ENCODE measurements at regions of chr22 and their contacts with region 1.

Region 1: GRCh38 chr22:38051900-38052862 is 5.0 kb upstream of the PICK1 start:
- DNase-seq: peak; percentile 83
- H3K4me3 ChIP-seq: no peak overlapping the region
- H3K27ac ChIP-seq: no peak overlapping the region
- H3K4me1 ChIP-seq: peaks cover 0 to 12% (median 5%) of the 10 kb centered on the region in 4 donors
- H3K27me3 ChIP-seq: no peaks in the 10 kb centered on the region
- CTCF ChIP-seq: peak; percentile 77 to 93 (median 82)
- EP300 ChIP-seq: no peak
- POLR2A ChIP-seq: no peak

Region 2: DNA sequence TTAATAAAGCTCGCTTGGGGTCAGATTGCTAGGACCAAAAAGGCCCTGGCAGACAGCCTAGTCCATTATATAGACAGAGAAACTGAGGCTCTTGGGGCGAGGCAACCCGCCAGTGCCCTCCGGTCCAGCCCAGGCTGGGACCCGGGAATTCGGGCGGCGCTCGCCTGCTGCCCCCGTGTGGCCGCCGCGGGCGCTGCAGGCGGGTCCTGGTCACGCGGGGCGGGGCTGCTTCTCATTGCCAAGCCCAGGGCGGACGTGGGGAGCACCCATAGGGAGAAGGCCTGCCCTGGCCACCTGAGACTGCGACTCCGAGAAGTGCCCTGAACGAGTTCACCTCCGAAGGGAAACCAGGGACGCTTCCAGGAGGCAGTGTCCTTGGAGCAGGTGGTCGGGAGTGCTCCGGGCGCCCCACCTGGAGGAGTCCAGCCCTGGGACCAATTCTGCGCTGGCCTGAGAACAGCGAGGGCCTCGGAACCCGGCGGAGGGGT is 301.0 kb after region 1 on chr22:
- in situ Hi-C with region 1: loop called in 1 of 4 experiments (anchors 10 kb)
- intact Hi-C with region 1: loop called (anchors 10 kb)
- DNase-seq: peak; percentile 77
- H3K4me3 ChIP-seq: no peak overlapping the region
- H3K27ac ChIP-seq: no peak overlapping the region
- H3K4me1 ChIP-seq: peaks cover 0 to 8% (median 5%) of the 10 kb centered on the region in 4 donors
- H3K27me3 ChIP-seq: no peaks in the 10 kb centered on the region
- CTCF ChIP-seq: peak; percentile 94 to 99 (median 99)
- EP300 ChIP-seq: no peak
- POLR2A ChIP-seq: no peak

Region 3: GRCh38 chr22:38569972-38570778 is 518.0 kb after region 1 on chr22 and contains the start of gene DMC1:
- in situ Hi-C with region 1: loop called in 2 of 4 experiments (anchors 10 to 25 kb)
- intact Hi-C with region 1: no loop called
- DNase-seq: peak; percentile 96
- H3K4me3 ChIP-seq: peak within 1 kb of the TSS; percentile 40 to 66 (median 56)
- H3K27ac ChIP-seq: peak within 1 kb of the TSS; percentile 77 to 81 (median 78)
- H3K4me1 ChIP-seq: peaks cover 3 to 20% (median 9%) of the 10 kb centered on the region in 4 donors
- H3K27me3 ChIP-seq: no peaks in the 10 kb centered on the region
- CTCF ChIP-seq: peak in 1 of 5 experiments; percentile 2
- EP300 ChIP-seq: no peak
- POLR2A ChIP-seq: peak; percentile 39
- total RNA-seq, gene DMC1: 0.32 to 86.2 (median 0.68) TPM in 3 of 4 donors, not detected in the other

Measured in transverse colon (tissue), 4 donors.